ENCODE measurements at regions of chr7 and their contacts with region 1.

Region 1: GRCh38 chr7:138738551-138739335 is 37.6 kb upstream of the SVOPL start:
- DNase-seq: peak; percentile 88

Region 2: DNA sequence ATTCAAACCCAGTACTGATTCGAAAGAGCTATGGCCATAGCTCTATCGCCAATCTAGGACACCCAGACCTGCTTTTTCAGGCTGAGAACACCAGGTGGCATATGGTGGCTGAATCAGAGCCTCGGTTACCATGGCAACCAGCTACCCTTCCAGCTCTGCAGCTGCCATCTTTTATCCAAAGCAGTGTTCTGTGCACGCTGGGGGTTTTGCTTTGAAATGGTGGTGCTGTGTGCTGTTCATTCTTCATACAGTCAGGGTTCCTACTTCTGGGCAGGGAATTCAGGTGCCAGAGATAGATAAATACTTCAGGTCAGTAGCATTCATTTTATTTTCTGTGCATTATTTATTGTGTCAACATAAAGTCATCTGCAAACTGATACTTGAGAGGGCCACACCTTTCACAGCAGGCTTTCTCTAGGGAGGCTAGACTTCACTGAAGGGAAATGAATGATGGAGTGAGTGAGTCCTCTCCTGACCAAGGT is 577.1 kb before region 1 on chr7:
- CTCF ChIA-PET with region 1: interaction called, 21 read pairs
- POLR2A ChIA-PET with region 1: interaction called, 3 read pairs
- DNase-seq: peak; percentile 97

Region 3: DNA sequence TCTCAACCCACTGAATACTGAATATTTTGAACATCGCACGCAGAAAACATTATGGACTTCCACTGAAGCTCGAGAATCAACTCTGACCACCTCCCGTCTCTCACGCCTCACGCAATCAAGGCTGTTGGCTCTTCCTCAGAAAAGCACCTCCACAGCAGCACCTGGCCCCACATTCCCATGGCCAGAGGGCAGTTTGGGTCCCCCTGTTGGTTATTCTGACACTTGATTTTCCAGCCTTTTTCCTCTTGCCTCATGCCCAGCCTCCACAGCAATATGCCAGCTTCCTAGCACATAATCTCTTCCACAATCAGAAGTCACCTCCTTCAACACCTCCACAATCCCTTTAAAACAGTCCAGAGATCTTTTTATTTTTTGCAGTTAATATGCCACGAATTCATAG is 93.5 kb before region 1 on chr7:
- CTCF ChIA-PET with region 1: no interaction called
- POLR2A ChIA-PET with region 1: no interaction called
- DNase-seq: no peak

Region 4: GRCh38 chr7:138726288-138726687 is 12.5 kb before region 1 on chr7:
- CTCF ChIA-PET with region 1: interaction called, 14 read pairs
- POLR2A ChIA-PET with region 1: no interaction called
- DNase-seq: peak; percentile 43

Region 5: DNA sequence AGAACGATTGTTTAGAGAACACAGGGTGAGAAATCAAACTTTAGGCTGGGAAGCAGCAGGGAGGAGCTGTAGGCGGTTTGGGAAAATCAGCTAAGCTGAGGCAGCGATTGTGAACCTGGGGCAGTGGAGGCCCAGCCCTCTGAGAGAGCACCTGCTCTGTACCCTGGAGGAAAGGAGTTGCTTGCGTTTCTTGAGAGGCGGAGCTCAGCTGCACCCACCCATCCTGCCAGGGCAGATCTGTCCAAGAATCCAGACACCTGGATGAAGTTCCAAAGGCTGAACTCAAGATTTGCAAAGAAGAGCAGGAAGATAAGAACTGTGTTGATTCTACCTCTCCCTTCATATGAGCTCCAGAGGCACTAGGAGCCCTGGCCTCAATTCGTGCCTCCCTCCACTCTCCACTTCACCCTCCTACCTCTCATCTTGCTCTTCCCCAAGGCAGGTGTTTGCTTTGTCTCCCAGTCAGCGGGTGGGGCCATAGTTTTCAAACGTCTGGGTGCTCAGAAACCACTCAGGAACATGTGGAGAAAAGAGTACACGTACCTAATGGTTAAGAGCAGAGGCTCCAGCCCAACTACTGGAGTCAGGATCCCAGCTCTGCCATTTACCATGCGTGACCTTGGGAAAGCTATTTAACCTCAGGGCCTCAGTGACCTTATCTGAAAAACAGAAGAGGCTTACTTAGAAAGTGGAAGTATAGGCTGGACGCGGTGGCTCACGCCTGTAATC is 37.6 kb after region 1 on chr7:
- CTCF ChIA-PET with region 1: no interaction called
- POLR2A ChIA-PET with region 1: no interaction called
- DNase-seq: no peak

Region 6: GRCh38 chr7:138797841-138798271 is 59.1 kb after region 1 on chr7 and contains the starts of genes ATP6V0A4 and TMEM213:
- CTCF ChIA-PET with region 1: no interaction called
- POLR2A ChIA-PET with region 1: no interaction called
- DNase-seq: no peak

Measured in HEK293T (cell line).